ENCODE measurements at regions of chr10 and their contacts with region 1.

Region 1: GRCh38 chr10:97736902-97737769 is at the start of gene ZFYVE27:
- DNase-seq: peak; percentile 85
- ATAC-seq: peak; percentile 90
- H3K4me3 ChIP-seq: peak within 1 kb of the TSS; percentile 91
- H3K27ac ChIP-seq: peak within 1 kb of the TSS; percentile 91
- H3K4me1 ChIP-seq: peaks cover 10% of the 10 kb centered on the region
- H3K27me3 ChIP-seq: no peaks in the 10 kb centered on the region
- CTCF ChIP-seq: no peak
- EP300 ChIP-seq: 0 out of 4 replicates have a peak, but pooled peaks of 1 of the 2 experiments have one; percentile 8
- POLR2A ChIP-seq: peak; percentile 98
- RAD21 ChIP-seq: no peak
- polyA plus RNA-seq, gene ZFYVE27: 1.1 to 1.3 TPM

Region 2: DNA sequence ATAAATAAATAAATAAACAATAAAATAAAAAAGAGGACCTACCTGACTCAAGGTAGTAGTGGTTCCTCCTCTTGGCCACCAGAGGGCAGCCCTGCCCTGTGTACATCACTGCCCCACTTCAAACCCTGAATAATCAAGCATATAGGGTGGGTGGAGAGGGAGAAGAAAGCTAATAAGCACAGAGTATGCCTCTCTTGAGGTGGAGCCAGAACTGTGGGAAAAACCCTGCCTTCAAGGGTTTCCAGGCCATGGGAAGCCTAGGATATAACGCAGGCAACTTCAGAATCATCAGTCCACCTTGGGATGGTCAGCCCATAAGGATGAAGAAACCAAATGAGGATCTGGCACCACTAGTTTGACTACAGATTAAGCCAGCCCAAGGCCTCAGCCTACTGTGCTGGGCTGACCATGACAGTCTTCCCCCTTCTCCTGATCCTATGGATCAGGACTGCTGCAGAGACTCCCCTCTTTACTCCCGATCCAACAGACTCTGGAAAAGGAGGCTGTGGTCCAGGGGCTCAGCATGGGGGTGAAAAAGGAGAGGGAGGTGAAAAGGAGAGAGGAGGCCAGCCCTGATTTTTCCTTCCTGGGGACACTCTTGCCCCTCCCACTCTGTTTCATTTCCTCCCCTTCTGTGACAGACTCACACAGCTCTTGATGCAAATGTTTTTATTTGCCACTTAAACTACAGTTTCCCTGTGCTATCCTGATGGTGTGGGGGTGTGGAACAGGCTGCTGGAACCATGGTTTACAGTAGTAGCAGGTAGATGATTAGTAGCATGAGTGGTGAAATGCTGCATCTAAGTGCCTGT is 60.2 kb before region 1 on chr10:
- CTCF ChIA-PET with region 1: interaction called, 124 read pairs
- POLR2A ChIA-PET with region 1: no interaction called
- RAD21 ChIA-PET with region 1: interaction called, 7 read pairs
- SMC1A ChIA-PET with region 1: interaction called, 17 read pairs
- in situ Hi-C with region 1: loop called (anchors 5 kb)
- intact Hi-C with region 1: no loop called
- DNase-seq: no peak
- ATAC-seq: peak; percentile 95
- H3K4me3 ChIP-seq: no peak overlapping the region
- H3K27ac ChIP-seq: 0 out of 2 replicates have a peak overlapping the region, but pooled peaks have one; percentile 6
- H3K4me1 ChIP-seq: peaks cover 12% of the 10 kb centered on the region
- H3K27me3 ChIP-seq: no peaks in the 10 kb centered on the region
- CTCF ChIP-seq: peak; percentile 76 to 80 (median 78)
- EP300 ChIP-seq: no peak
- POLR2A ChIP-seq: peak; percentile 20; the same call in 1 of the 2 replicates
- RAD21 ChIP-seq: peak; percentile 81

Region 3: GRCh38 chr10:97714048-97714371 is 23.1 kb before region 1 on chr10:
- CTCF ChIA-PET with region 1: interaction called, 416 read pairs
- POLR2A ChIA-PET with region 1: no interaction called
- RAD21 ChIA-PET with region 1: interaction called, 6 read pairs
- SMC1A ChIA-PET with region 1: interaction called, 24 read pairs
- in situ Hi-C with region 1: no loop called
- intact Hi-C with region 1: no loop called
- DNase-seq: no peak
- ATAC-seq: peak; percentile 87
- H3K4me3 ChIP-seq: peak overlapping the region; percentile 74
- H3K27ac ChIP-seq: no peak overlapping the region
- H3K4me1 ChIP-seq: peaks cover 3% of the 10 kb centered on the region; the same call in 1 of the 2 replicates
- H3K27me3 ChIP-seq: peaks cover 0 to 2% of the 10 kb centered on the region in 2 experiments; a peak in 1 of 4 replicates
- CTCF ChIP-seq: peak; percentile 13 to 42 (median 28); a peak in 3 of 6 replicates
- EP300 ChIP-seq: no peak
- POLR2A ChIP-seq: peak; percentile 87
- RAD21 ChIP-seq: no peak

Measured in GM12878 (cell line).